ENCODE measurements at regions of chr6 and their contacts with region 1.

Region 1: GRCh38 chr6:167093922-167094432 is 28.9 kb upstream of the CCR6 start:
- DNase-seq: peak; percentile 88
- CTCF ChIP-seq: no peak

Region 2: DNA sequence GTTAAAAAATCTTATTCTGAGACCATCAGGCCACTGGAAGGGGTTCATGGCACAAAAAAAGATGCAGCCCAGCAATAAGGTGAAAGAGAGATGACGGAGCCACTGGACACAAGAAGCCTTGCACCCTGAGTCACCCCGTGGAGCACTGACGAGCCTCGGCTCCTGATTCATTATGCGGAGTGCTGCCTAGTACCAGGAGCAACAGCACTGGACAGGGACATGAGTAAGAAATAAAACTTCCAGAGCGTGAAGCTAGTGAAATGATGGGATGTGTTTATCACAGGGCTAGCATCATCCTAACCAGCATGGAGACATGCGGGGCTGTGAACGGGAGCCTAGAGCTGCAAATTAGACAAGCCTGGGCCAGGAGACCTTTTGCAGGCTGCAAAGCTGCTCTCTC is 190.9 kb before region 1 on chr6:
- CTCF ChIA-PET with region 1: no interaction called
- POLR2A ChIA-PET with region 1: no interaction called
- DNase-seq: peak; percentile 14
- CTCF ChIP-seq: no peak

Region 3: GRCh38 chr6:166969390-166970002 is 124.5 kb before region 1 on chr6:
- CTCF ChIA-PET with region 1: no interaction called
- POLR2A ChIA-PET with region 1: no interaction called
- DNase-seq: no peak
- CTCF ChIP-seq: no peak

Region 4: DNA sequence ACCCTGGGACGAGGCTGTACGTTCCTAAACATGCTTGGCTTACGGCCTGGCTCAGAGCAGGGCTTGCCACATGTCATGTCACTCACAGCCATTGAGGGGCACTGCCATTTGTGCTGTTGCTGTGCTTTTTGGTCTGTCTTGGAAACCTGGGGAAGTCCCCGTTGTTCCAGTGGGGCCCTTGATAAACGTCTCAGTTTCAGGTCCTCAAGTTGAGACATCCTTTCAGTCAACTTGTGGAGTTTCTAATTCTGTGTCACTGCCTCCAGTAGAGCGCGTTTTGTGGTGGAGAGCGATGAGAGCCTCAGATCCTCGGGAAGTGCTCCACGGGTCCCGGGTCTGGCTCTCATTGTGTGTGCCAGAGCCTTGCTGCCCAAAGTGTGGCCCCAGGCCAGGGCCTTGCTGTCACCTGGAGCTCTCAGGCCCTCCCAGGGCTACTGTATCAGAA is 14.1 kb before region 1 on chr6:
- CTCF ChIA-PET with region 1: interaction called, 12 read pairs
- POLR2A ChIA-PET with region 1: interaction called, 3 read pairs
- DNase-seq: peak; percentile 83
- CTCF ChIP-seq: peak; percentile 62

Region 5: GRCh38 chr6:167512696-167513375 is 418.9 kb after region 1 on chr6:
- CTCF ChIA-PET with region 1: no interaction called
- POLR2A ChIA-PET with region 1: no interaction called
- DNase-seq: no peak
- CTCF ChIP-seq: no peak